Ascending aorta (tissue), 2 donors: ENCODE measurements at regions of chr7 and their contacts with region 1.

Region 1: DNA sequence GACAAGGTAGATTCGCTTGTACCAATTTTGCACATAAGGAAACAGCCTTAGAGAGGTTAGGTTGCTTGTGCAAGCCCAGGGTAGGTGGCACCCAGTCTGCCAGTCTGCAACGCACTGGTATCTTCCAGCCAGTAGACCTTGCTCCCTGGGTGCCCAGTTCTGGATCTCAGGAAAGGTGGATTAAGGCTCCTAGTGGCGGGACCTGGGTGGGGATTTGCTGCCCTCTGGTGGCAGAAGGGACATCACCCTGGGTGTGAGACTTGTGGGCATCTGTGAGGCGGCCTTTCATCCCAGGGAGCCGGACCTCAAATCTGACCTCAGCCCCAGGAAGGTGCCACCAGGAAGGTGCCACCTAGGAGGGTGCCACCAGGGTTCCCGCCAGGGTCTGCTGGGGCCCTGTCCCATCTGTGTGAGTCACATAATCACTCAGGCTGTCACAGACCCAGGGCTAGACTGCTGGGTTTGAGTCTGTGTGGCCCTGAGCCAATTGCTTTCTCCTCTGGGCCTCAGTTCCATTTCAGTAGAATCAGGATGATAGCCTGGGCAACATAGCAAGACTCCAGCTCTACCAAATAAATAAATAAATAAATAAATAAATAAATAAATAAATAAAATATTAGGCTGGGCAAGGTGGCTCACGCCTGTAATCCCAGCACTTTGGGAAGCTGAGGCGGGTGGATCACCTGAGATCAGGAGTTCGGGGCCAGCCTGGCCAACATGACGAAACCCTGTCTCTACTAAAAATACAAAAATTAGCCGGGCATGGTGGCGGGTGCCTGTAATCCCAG is 5.3 kb upstream of the PRKRIP1 start:
- DNase-seq: peak; percentile 27 to 88
- H3K4me3 ChIP-seq: no peak overlapping the region
- H3K27ac ChIP-seq: no peak overlapping the region
- H3K4me1 ChIP-seq: no peaks in the 10 kb centered on the region
- H3K27me3 ChIP-seq: no peaks in the 10 kb centered on the region
- CTCF ChIP-seq: peak; percentile 86 to 94 (median 89)

Region 2: DNA sequence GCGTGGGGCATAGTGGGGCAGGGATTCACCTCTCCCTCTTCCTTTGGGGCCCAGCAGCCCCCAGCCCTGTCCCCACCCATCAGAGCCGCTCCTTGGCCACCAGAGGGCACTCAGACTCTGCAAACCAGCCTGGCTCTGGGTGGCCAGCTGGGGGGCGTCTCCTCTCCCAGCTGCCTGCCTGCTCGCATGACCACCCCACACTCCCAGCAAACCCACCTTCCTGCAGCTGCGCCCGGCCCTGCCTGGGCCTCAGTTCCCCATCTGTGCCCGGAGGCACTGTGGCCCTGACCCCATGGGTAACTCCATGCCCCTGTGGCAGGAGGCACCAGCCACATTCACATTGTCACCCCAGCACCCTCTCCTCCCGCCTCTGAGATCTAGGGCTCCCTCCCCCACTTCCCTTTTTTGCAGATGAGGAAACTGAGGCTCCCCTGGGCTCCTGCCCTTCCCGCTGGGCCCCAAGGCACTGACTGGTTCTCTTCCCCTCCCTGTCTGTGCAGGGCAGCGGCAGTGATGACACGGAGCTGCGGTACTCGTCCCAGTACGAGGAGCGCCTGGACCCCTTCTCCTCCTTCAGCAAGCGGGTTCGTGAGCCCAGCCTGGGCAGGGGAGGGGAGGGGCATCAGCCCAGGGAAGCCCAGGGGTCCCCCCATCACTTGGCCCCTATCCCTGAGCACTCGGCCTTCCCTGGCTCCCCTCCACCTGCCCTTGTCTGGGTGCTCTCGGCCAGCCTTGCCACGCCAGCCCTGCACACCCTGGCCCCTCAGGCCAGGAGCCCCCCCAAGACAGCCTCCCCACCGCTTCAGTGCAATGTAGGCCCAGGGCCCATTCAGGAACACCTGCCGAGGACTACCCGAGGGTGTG is 111.1 kb before region 1 on chr7:
- intact Hi-C with region 1: loop called (anchors 1 kb)
- DNase-seq: no peak
- H3K4me3 ChIP-seq: no peak overlapping the region
- H3K27ac ChIP-seq: no peak overlapping the region
- H3K4me1 ChIP-seq: no peaks in the 10 kb centered on the region
- H3K27me3 ChIP-seq: no peaks in the 10 kb centered on the region
- CTCF ChIP-seq: peak; percentile 53 to 84 (median 70)